ENCODE measurements at regions of chr7 and their contacts with region 1.

Region 1: DNA sequence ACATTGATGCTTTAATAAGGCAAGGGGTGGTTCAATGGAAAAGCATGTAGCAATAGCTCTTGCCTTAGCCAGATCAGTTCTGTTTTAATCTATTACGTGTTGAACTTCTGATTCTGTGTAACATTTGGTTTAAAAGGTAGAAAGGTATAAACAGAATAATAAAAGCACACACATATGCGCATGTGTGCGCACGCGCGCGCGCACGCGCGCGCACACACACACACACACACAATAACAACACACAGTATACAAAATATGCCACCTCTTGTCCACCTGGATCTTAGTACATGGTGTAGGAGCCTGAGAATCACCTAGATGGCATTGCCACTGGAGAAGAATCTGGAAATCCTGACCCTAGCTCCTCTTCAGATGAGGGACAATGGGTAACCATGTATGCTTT is 49.6 kb upstream of the TEX47 start:
- DNase-seq: no peak
- H3K4me3 ChIP-seq: no peak overlapping the region
- H3K27ac ChIP-seq: no peak overlapping the region
- H3K4me1 ChIP-seq: no peaks in the 10 kb centered on the region
- H3K27me3 ChIP-seq: no peaks in the 10 kb centered on the region
- CTCF ChIP-seq: no peak

Region 2: GRCh38 chr7:88795553-88795952 is 49.5 kb before region 1 on chr7 and contains the start of gene TEX47:
- intact Hi-C with region 1: no loop called
- DNase-seq: no peak
- H3K4me3 ChIP-seq: no peak within 1 kb of the TSS
- H3K27ac ChIP-seq: no peak within 1 kb of the TSS
- H3K4me1 ChIP-seq: no peaks in the 10 kb centered on the region
- H3K27me3 ChIP-seq: no peaks in the 10 kb centered on the region
- CTCF ChIP-seq: no peak
- total RNA-seq, gene TEX47: not detected

Region 3: DNA sequence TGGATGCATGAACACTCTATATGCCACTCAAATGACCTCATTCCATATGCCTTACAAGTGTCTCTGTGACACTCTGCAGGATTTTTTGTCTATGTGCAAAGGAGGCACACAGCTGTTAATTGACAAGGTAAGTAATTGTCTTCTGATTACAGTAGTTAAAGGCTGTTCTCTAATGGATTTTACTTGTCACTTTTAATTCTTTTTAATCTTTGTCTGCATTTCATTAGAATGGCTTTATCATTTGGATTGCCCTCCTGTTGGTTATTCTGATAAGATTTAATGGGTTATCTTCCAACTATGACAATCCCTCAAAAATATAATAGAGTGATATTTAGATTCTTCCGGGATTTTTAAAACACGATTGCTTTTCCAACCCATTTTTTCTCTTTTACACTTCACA is 240.5 kb after region 1 on chr7:
- intact Hi-C with region 1: loop called (anchors 5 kb)
- DNase-seq: no peak
- H3K4me3 ChIP-seq: no peak overlapping the region
- H3K27ac ChIP-seq: no peak overlapping the region
- H3K4me1 ChIP-seq: no peaks in the 10 kb centered on the region
- H3K27me3 ChIP-seq: no peaks in the 10 kb centered on the region
- CTCF ChIP-seq: no peak